A549 (cell line): ENCODE measurements at regions of chr2 and their contacts with region 1.

Region 1: GRCh38 chr2:8872821-8873432 is 35.5 kb upstream of the KIDINS220 start:
- DNase-seq: peak; percentile 61 to 70
- ATAC-seq: peak; percentile 57 to 81; a peak in 3 of 6 replicates
- H3K4me3 ChIP-seq: no peak overlapping the region
- H3K27ac ChIP-seq: no peak overlapping the region
- H3K4me1 ChIP-seq: no peaks in the 10 kb centered on the region
- CTCF ChIP-seq: peak; percentile 93
- EP300 ChIP-seq: no peak
- POLR2A ChIP-seq: no peak
- RAD21 ChIP-seq: peak; percentile 79 to 80

Region 2: GRCh38 chr2:8847400-8847799 is 25.5 kb before region 1 on chr2:
- CTCF ChIA-PET with region 1: interaction called, 12 read pairs
- POLR2A ChIA-PET with region 1: no interaction called
- DNase-seq: peak in 1 of 2 experiments; percentile 16
- ATAC-seq: no peak
- H3K4me3 ChIP-seq: no peak overlapping the region
- H3K27ac ChIP-seq: no peak overlapping the region
- H3K4me1 ChIP-seq: no peaks in the 10 kb centered on the region
- CTCF ChIP-seq: no peak
- EP300 ChIP-seq: no peak
- POLR2A ChIP-seq: no peak
- RAD21 ChIP-seq: no peak

Region 3: GRCh38 chr2:8862230-8862629 is 10.7 kb before region 1 on chr2:
- CTCF ChIA-PET with region 1: interaction called, 10 read pairs
- POLR2A ChIA-PET with region 1: no interaction called
- DNase-seq: no peak
- ATAC-seq: no peak
- H3K4me3 ChIP-seq: no peak overlapping the region
- H3K27ac ChIP-seq: no peak overlapping the region
- H3K4me1 ChIP-seq: no peaks in the 10 kb centered on the region
- CTCF ChIP-seq: no peak
- EP300 ChIP-seq: no peak
- POLR2A ChIP-seq: no peak
- RAD21 ChIP-seq: no peak

Region 4: DNA sequence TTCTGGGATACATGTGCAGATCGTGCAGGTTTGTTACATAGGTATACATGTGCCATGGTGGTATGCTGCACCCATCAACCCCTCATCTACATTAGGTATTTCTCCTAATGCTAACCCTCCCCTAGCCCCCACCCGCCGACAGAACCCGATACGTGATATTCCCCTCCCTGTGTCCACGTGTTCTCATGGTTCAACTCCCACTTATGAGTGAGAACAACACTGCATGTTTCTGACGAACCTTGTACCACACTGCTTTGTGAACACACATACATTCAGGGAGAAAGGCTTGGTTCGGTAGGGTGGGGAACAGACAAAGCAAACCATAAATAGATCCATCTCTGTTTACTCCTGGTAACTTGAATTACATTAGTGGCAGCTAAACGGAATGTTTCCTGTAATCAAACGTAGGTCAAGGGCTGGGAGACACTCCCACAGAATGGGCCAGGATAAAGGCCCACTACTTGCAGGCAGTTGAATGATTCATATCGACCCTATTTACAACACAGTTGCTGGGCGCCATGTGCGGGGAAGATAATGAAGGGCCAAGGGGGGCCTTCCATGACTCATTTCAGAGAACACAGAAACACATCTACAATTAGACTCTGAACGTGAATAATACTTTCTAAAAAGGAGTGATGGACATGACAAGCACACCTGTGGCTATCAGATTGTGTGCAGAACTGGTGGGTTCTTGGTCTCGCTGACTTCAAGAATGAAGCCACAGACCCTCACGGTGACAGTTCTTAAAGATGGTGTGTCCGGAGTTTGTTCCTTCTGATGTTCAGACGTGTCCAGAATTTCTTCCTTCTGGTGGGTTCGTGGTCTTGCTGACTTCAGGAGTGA is 21.3 kb after region 1 on chr2:
- CTCF ChIA-PET with region 1: interaction called, 23 read pairs
- POLR2A ChIA-PET with region 1: no interaction called
- DNase-seq: no peak
- ATAC-seq: peak in 1 of 2 experiments; percentile 26; a peak in 2 of 6 replicates
- H3K4me3 ChIP-seq: no peak overlapping the region
- H3K27ac ChIP-seq: no peak overlapping the region
- H3K4me1 ChIP-seq: no peaks in the 10 kb centered on the region
- CTCF ChIP-seq: no peak
- EP300 ChIP-seq: no peak
- POLR2A ChIP-seq: no peak
- RAD21 ChIP-seq: no peak

Region 5: GRCh38 chr2:9300829-9301453 is 428.0 kb after region 1 on chr2:
- CTCF ChIA-PET with region 1: no interaction called
- POLR2A ChIA-PET with region 1: no interaction called
- DNase-seq: no peak
- ATAC-seq: no peak
- H3K4me3 ChIP-seq: no peak overlapping the region
- H3K27ac ChIP-seq: no peak overlapping the region
- H3K4me1 ChIP-seq: no peaks in the 10 kb centered on the region
- CTCF ChIP-seq: no peak
- EP300 ChIP-seq: no peak
- POLR2A ChIP-seq: no peak
- RAD21 ChIP-seq: no peak